CD4-positive, alpha-beta memory T cell (primary cell): ENCODE measurements at regions of chr14 and their contacts with region 1.

Region 1: GRCh38 chr14:23057757-23058653 is 685 bp upstream of the CDH24 start:
- DNase-seq: peak; percentile 80 to 84 (median 82)
- H3K4me3 ChIP-seq: peak overlapping the region; percentile 36 to 89
- H3K4me3 Mint-ChIP-seq: peak overlapping the region; percentile 84 to 91 (median 88)
- H3K27ac ChIP-seq: peak overlapping the region; percentile 36
- H3K27ac Mint-ChIP-seq: peak overlapping the region in 6 of 7 donors; percentile 60 to 83 (median 82)
- H3K4me1 ChIP-seq: peaks cover 17% of the 10 kb centered on the region
- H3K4me1 Mint-ChIP-seq: peaks cover 11 to 21% (median 15%) of the 10 kb centered on the region in 4 donors
- H3K27me3 ChIP-seq: no peaks in the 10 kb centered on the region
- H3K27me3 Mint-ChIP-seq: peaks cover 0 to 1% of the 10 kb centered on the region in 2 donors

Region 2: DNA sequence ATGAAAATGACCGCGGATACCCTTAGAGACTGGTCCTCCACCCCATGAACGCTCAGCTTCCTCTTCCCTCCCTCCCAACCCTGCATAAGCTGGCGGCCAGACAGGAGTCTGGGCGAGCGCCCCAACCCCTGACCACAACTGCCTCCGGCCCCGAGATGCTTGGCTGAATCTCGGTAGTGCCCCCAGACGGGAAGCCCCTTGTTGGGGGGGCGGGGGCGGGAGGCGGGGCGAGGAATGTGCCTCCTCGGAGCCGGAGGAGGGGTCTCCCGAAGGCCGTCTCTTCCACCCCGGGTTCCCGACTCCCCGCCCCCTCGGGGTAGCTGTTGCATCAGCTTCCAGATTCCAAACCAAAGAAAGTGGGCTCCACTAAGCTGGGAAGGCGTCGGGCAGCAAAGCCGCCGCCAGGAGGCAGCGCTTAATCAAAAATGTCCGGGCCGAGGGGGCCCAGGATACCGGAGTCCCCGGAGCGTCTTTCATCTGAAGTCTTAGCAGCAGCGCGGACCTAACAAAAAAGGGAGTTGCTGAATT is 235.4 kb before region 1 on chr14:
- CTCF ChIA-PET with region 1: interaction called, 6 read pairs
- POLR2A ChIA-PET with region 1: no interaction called
- intact Hi-C with region 1: loop called (anchors 5 kb)
- DNase-seq: peak; percentile 63 to 70 (median 66)
- H3K4me3 ChIP-seq: peak overlapping the region in 1 of 2 donors; percentile 27
- H3K4me3 Mint-ChIP-seq: peak overlapping the region; percentile 20 to 77 (median 66)
- H3K27ac ChIP-seq: no peak overlapping the region
- H3K27ac Mint-ChIP-seq: peak overlapping the region in 2 of 7 donors; percentile 19 to 43
- H3K4me1 ChIP-seq: peaks cover 7% of the 10 kb centered on the region
- H3K4me1 Mint-ChIP-seq: peaks cover 6 to 22% (median 12%) of the 10 kb centered on the region in 4 donors
- H3K27me3 ChIP-seq: no peaks in the 10 kb centered on the region
- H3K27me3 Mint-ChIP-seq: peaks cover 6 to 16% of the 10 kb centered on the region in 2 donors

Region 3: DNA sequence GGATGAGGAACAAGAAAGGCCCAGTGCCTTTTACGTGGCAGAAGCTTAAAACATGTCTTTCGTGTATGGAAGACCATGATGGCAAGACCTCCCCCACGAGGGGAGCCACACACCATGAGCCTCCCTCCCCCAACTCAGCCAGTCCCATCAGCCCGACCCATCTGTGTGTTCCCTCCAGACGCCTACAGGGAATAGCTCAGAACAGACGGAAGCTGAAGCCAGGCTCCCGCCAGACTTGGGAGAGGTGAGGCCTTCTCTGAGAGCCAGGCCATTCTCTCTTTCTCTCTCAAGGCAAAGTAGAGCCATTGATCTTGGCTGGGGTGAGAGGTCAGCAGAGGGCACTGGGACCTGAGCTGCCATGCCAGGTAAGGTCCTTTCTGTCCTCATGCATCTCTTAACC is 165.5 kb before region 1 on chr14:
- CTCF ChIA-PET with region 1: no interaction called
- POLR2A ChIA-PET with region 1: no interaction called
- intact Hi-C with region 1: no loop called
- DNase-seq: no peak
- H3K4me3 ChIP-seq: no peak overlapping the region
- H3K4me3 Mint-ChIP-seq: no peak overlapping the region
- H3K27ac ChIP-seq: no peak overlapping the region
- H3K27ac Mint-ChIP-seq: peak overlapping the region in 1 of 7 donors; percentile 27
- H3K4me1 ChIP-seq: peaks cover 28% of the 10 kb centered on the region
- H3K4me1 Mint-ChIP-seq: peaks cover 18 to 30% (median 24%) of the 10 kb centered on the region in 4 donors
- H3K27me3 ChIP-seq: no peaks in the 10 kb centered on the region
- H3K27me3 Mint-ChIP-seq: no peaks in the 10 kb centered on the region

Region 4: DNA sequence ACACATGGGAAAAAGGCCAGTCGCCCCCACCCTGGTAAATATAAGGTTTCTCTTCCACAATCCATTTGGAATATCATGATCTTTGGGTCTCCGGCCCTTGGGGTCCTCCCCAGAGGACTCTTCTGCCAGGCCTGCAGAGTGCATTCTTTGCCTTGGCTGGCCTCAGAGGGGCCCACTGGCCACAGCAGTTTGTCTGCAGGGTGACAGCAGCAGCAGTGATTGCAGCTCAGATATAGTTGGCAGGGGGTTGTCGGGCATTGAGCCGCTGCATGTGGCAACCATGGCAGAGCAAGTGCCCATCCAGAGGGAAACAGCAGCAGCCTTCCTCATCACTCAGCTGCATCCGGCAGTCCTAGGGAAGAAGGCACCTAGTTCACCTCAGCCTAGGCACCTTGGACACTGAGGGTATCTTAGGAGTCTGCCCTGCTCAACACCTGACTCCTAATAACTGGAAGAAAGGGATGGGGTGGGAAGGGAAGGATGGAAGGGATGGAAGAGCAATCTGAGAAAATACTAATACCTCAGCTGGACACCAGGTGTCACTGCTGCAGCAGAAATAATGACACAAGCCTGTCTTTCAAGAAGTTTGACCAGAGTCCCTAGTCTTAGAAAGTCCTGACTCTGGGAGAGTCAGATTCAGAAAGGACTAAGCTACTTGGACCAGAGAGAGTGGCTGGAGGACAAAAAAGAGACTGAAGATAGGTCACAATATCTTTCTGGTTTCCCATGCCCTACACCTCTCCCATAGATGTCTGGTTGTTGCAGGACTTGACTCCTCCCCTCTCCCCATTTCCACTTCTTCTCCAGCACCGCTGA is 84.6 kb before region 1 on chr14:
- CTCF ChIA-PET with region 1: interaction called, 1,070 read pairs
- POLR2A ChIA-PET with region 1: interaction called, 4 read pairs
- intact Hi-C with region 1: loop called (anchors 1 kb)
- DNase-seq: peak in 4 of 5 donors; percentile 32 to 46 (median 38)
- H3K4me3 ChIP-seq: no peak overlapping the region
- H3K4me3 Mint-ChIP-seq: no peak overlapping the region
- H3K27ac ChIP-seq: no peak overlapping the region
- H3K27ac Mint-ChIP-seq: no peak overlapping the region
- H3K4me1 ChIP-seq: no peaks in the 10 kb centered on the region
- H3K4me1 Mint-ChIP-seq: no peaks in the 10 kb centered on the region
- H3K27me3 ChIP-seq: no peaks in the 10 kb centered on the region
- H3K27me3 Mint-ChIP-seq: peaks cover 0 to 3% of the 10 kb centered on the region in 2 donors

Region 5: GRCh38 chr14:23034483-23035302 is 23.3 kb before region 1 on chr14 and contains the start of gene PSMB5:
- CTCF ChIA-PET with region 1: interaction called, 3 read pairs
- POLR2A ChIA-PET with region 1: interaction called, 6 read pairs
- intact Hi-C with region 1: loop called (anchors 1 kb)
- DNase-seq: peak; percentile 93 to 96 (median 93)
- H3K4me3 ChIP-seq: peak within 1 kb of the TSS; percentile 66 to 90
- H3K4me3 Mint-ChIP-seq: peak within 1 kb of the TSS; percentile 87 to 98 (median 93)
- H3K27ac ChIP-seq: peak within 1 kb of the TSS; percentile 89
- H3K27ac Mint-ChIP-seq: peak within 1 kb of the TSS; percentile 89 to 99 (median 98)
- H3K4me1 ChIP-seq: peaks cover 19% of the 10 kb centered on the region
- H3K4me1 Mint-ChIP-seq: peaks cover 17 to 43% (median 31%) of the 10 kb centered on the region in 4 donors
- H3K27me3 ChIP-seq: no peaks in the 10 kb centered on the region
- H3K27me3 Mint-ChIP-seq: no peaks in the 10 kb centered on the region
- total RNA-seq, gene PSMB5: 31.4 to 33.6 TPM

Region 6: DNA sequence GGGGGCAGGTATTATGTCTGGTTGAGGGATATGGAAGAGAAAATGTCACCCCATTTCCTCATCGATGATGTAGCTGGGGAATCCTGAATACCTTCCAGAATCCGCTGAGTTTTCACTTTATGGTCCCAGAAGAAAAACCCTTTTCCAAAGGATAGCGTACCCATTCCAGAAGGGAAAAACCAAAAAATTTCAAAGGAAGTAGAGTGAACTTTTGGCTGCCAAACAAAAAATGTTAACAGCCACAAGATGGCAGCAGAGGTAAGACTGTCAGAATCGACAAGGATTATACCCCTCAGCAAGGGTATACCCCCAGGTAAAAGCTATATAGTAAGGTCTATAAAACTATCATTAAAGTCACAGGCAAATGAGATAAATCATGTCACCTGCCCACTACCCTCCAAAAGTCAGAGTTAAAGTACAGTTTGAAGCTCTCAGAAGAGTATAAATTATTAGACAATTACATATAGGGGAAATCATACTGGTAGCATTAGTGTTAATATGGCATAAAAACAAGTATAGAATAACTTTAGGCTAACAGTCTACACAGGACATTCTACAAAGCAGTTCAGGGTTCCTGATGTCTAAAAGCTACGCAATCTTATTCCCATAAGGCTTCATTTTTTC is 18.9 kb after region 1 on chr14:
- CTCF ChIA-PET with region 1: interaction called, 40 read pairs
- POLR2A ChIA-PET with region 1: interaction called, 4 read pairs
- intact Hi-C with region 1: no loop called
- DNase-seq: peak in 4 of 5 donors; percentile 25 to 42 (median 38)
- H3K4me3 ChIP-seq: no peak overlapping the region
- H3K4me3 Mint-ChIP-seq: no peak overlapping the region
- H3K27ac ChIP-seq: no peak overlapping the region
- H3K27ac Mint-ChIP-seq: peak overlapping the region in 3 of 7 donors; percentile 16 to 70 (median 57)
- H3K4me1 ChIP-seq: peaks cover 5% of the 10 kb centered on the region
- H3K4me1 Mint-ChIP-seq: peaks cover 6 to 15% (median 10%) of the 10 kb centered on the region in 4 donors
- H3K27me3 ChIP-seq: no peaks in the 10 kb centered on the region
- H3K27me3 Mint-ChIP-seq: no peaks in the 10 kb centered on the region

Region 7: DNA sequence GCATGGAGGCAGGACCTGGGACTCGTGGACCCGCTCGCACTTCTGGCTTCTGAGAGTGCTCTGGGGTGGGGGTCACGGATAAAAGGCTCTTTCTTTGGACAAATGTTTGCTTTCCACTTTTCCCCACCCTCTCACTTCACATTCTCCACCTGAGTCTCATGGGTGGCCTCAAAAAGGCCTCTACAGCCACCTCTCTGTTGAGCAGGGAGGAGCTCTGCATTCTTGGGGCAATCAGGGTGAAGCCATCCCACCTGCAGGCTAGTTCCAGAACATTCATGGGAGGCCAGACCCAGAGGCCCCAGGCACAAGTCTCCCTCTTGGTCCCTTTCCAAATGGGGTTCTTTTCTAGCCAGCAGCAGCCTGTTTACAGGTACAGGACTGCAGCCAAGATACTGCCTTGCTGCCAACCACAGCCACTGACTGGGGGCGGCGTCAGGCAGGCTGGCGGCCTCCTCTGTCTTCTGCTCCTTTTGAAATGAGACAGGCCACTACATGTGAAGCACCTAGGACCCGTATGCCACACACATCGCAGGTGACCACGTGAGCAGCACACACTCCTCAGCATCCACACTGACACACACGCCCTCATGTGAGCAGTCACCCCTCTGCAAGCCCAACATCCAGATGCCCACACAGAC is 79.3 kb after region 1 on chr14:
- CTCF ChIA-PET with region 1: no interaction called
- POLR2A ChIA-PET with region 1: no interaction called
- intact Hi-C with region 1: no loop called
- DNase-seq: no peak
- H3K4me3 ChIP-seq: no peak overlapping the region
- H3K4me3 Mint-ChIP-seq: no peak overlapping the region
- H3K27ac ChIP-seq: no peak overlapping the region
- H3K27ac Mint-ChIP-seq: no peak overlapping the region
- H3K4me1 ChIP-seq: no peaks in the 10 kb centered on the region
- H3K4me1 Mint-ChIP-seq: no peaks in the 10 kb centered on the region
- H3K27me3 ChIP-seq: no peaks in the 10 kb centered on the region
- H3K27me3 Mint-ChIP-seq: peaks cover 0 to 1% of the 10 kb centered on the region in 2 donors

Region 8: GRCh38 chr14:23160924-23161538 is 103.0 kb after region 1 on chr14:
- CTCF ChIA-PET with region 1: no interaction called
- POLR2A ChIA-PET with region 1: no interaction called
- intact Hi-C with region 1: no loop called
- DNase-seq: no peak
- H3K4me3 ChIP-seq: no peak overlapping the region
- H3K4me3 Mint-ChIP-seq: peak overlapping the region in 1 of 8 donors; percentile 31
- H3K27ac ChIP-seq: no peak overlapping the region
- H3K27ac Mint-ChIP-seq: peak overlapping the region in 4 of 7 donors; percentile 68 to 82 (median 77)
- H3K4me1 ChIP-seq: peaks cover 8% of the 10 kb centered on the region
- H3K4me1 Mint-ChIP-seq: peaks cover 0 to 23% (median 10%) of the 10 kb centered on the region in 4 donors
- H3K27me3 ChIP-seq: no peaks in the 10 kb centered on the region
- H3K27me3 Mint-ChIP-seq: peaks cover 3 to 6% of the 10 kb centered on the region in 2 donors